ENCODE measurements at regions of chr2 and their contacts with region 1.

Region 1: GRCh38 chr2:234770031-234770506 is 181.7 kb upstream of the SH3BP4 start:
- DNase-seq: peak; percentile 59
- H3K4me3 ChIP-seq: no peak overlapping the region
- H3K27ac ChIP-seq: peak overlapping the region; percentile 71
- H3K27me3 ChIP-seq: no peaks in the 10 kb centered on the region
- CTCF ChIP-seq: no peak

Region 2: DNA sequence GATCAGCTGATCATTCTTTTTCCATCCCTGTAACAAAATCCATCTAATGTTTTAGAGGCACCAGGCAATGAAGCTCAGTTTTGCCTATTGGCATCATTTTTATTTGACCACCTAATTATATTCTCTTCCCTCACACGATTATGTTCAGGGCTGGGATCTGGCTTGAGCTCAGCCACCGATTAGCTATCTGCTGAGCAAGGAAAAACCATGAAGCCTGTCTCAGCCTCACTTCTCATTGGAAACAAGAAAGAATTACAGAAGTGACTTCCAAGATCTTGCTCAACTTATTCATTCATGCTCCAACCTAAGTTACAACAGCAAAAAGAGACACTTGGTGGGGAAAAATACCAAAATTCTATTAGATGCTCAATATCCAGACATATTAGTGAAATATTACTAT is 42.8 kb after region 1 on chr2:
- CTCF ChIA-PET with region 1: no interaction called
- POLR2A ChIA-PET with region 1: no interaction called
- DNase-seq: no peak
- H3K4me3 ChIP-seq: no peak overlapping the region
- H3K27ac ChIP-seq: no peak overlapping the region
- H3K27me3 ChIP-seq: no peaks in the 10 kb centered on the region
- CTCF ChIP-seq: no peak

Region 3: GRCh38 chr2:234823877-234824376 is 53.9 kb after region 1 on chr2:
- CTCF ChIA-PET with region 1: no interaction called
- POLR2A ChIA-PET with region 1: interaction called, 13 read pairs
- DNase-seq: peak; percentile 96
- H3K4me3 ChIP-seq: no peak overlapping the region
- H3K27ac ChIP-seq: peak overlapping the region; percentile 90
- H3K27me3 ChIP-seq: no peaks in the 10 kb centered on the region
- CTCF ChIP-seq: no peak